Activated naive CD4-positive, alpha-beta T cell treated with anti-CD3 and anti-CD28 coated beads for 36 hours (primary cell): ENCODE measurements at regions of chr2 and their contacts with region 1.

Region 1: DNA sequence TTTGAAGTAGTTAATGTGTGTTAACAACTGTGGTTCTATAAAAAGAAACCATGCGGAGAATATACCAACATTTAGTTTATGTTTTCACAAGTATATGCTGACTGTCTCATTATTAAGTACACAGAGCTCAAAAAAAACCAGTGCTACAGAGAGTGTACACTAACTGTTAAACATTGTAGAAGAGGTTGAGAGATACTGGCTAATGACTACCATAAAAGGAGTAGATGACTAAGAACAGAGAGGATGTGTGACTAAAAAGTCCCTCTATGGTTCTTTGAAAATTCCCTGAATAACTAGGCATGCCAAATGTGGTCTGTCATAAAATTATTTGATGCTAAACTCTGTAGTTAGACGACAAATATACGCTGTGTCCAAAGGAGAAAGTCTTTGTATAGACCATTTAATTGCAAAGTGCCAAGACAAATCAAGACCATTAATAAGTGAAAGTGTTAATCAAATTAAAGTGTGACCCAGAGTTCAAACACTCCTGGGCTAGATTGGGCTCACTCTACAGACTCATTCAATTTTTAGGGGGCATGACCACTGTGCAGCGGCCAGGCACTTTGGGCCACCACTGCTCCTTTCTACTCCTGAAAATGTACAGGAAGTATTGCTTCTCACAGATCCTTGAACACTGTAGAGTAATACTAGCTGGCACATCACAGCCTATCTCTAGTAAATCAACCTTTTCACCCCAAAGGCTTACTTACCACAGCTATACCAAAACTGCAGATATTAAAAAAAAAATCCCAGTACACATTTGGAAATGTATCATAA is 45.1 kb upstream of the SERTAD2 start:
- DNase-seq: no peak
- H3K4me3 Mint-ChIP-seq: peak overlapping the region; percentile 8
- H3K27ac Mint-ChIP-seq: peak overlapping the region; percentile 68
- H3K4me1 Mint-ChIP-seq: peaks cover 47% of the 10 kb centered on the region
- H3K27me3 Mint-ChIP-seq: no peaks in the 10 kb centered on the region

Region 2: GRCh38 chr2:64653349-64654062 is 45.4 kb before region 1 on chr2 and contains the start of gene SERTAD2:
- CTCF ChIA-PET with region 1: interaction called, 9 read pairs
- intact Hi-C with region 1: loop called (anchors 1 kb)
- DNase-seq: peak; percentile 85
- H3K4me3 Mint-ChIP-seq: peak within 1 kb of the TSS; percentile 79
- H3K27ac Mint-ChIP-seq: peak within 1 kb of the TSS; percentile 83
- H3K4me1 Mint-ChIP-seq: peaks cover 74% of the 10 kb centered on the region
- H3K27me3 Mint-ChIP-seq: no peaks in the 10 kb centered on the region
- total RNA-seq, gene SERTAD2: 11.4 to 11.6 TPM

Region 3: DNA sequence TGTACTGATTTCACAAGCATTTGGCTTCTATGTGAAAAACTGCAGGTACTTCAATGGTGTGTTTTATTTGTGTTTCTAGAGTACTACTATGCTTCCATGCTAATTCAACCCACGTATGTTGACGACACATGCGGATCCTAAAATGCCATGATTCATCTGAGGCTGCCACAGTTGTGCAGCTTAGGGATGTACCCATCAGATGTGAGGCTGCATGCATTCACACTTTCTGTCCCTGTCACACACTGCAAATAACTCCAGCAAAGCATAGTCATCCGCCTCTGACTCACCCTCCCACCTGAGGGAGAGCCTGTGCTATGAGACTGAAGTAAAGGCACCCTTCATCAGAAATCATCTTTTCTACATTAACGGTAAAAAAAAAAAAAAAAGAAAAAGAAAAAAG is 23.0 kb before region 1 on chr2:
- CTCF ChIA-PET with region 1: interaction called, 3 read pairs
- intact Hi-C with region 1: loop called (anchors 1 kb)
- DNase-seq: peak; percentile 92
- H3K4me3 Mint-ChIP-seq: no peak overlapping the region
- H3K27ac Mint-ChIP-seq: no peak overlapping the region
- H3K4me1 Mint-ChIP-seq: peaks cover 42% of the 10 kb centered on the region
- H3K27me3 Mint-ChIP-seq: no peaks in the 10 kb centered on the region

Region 4: DNA sequence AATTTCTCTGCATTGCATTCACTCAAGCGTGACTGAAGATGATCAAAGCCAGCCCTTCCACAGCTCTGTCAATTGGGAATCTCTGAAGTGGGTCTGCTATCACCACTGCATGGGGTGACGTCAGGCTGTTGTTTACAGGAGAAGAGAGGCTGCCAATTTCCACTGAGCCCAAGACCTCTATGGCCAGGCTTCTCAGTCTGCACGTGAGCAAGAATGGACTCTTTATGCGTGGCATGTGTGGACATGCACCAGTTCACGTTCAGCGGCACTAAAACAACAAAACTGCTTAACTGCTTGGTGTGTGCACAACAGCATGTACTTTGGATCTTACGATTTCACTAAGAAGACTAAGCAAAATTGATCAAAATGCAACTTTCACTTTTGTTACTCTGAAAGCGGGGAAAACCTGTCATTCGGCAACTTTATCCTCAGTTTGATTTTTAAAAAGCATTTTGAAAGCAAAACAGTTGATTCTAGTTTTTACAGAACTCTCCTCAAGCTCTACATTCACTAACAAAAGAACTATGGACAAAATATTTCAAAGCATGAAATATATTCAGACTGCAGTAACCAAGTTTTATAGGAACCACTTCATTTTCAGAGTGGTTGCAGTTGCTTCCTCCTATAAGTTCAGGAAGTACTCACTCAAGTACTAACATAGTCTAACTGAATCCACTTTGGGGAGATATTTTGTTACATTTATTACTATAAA is 31.9 kb after region 1 on chr2:
- CTCF ChIA-PET with region 1: interaction called, 3 read pairs
- intact Hi-C with region 1: loop called (anchors 1 kb)
- DNase-seq: peak; percentile 49
- H3K4me3 Mint-ChIP-seq: peak overlapping the region; percentile 78
- H3K27ac Mint-ChIP-seq: peak overlapping the region; percentile 90
- H3K4me1 Mint-ChIP-seq: peaks cover 63% of the 10 kb centered on the region
- H3K27me3 Mint-ChIP-seq: no peaks in the 10 kb centered on the region

Region 5: DNA sequence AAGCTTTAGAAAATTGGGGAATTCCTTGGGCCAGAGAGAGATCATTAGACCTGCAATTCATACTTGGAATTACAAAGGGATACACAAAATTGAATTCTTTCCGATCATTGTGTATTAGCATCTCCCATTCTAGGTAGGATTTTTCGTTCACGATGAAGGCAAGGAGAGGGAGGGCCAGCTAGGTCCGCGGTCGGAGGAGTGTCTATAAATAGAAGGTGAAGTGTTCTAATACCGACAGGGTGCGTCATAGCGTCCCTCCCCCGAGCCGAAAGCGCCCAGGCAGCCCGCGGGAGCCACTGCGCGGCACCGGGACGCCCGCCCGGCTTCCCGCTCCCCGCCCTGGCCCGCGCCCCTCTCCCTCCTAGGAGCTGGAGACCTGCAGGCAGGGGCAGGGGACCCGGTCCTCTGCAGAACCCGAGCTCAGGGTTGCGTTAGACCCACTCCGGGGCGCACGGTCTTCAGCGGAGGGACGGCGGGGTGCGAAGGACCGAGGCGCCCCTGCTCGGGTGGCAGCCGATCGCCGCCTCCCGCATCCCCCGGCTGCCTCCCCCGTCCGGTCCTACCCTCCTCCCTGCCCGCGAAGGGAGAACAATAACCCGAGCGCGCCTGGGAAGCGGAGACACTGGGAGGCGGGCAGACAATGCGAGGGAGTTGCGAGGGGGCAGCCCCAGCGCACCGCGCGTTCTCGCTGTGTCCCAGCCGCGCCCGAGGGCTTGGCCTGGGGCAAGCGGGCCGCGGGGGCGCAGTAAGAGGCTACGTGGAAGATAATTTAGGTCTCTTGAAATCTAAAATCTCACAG is 69.0 kb after region 1 on chr2:
- CTCF ChIA-PET with region 1: no interaction called
- intact Hi-C with region 1: loop called (anchors 1 kb)
- DNase-seq: peak; percentile 85
- H3K4me3 Mint-ChIP-seq: peak overlapping the region; percentile 80
- H3K27ac Mint-ChIP-seq: peak overlapping the region; percentile 76
- H3K4me1 Mint-ChIP-seq: peaks cover 26% of the 10 kb centered on the region
- H3K27me3 Mint-ChIP-seq: no peaks in the 10 kb centered on the region

Region 6: GRCh38 chr2:65056215-65057053 is 357.6 kb after region 1 on chr2 and contains the start of gene CEP68:
- CTCF ChIA-PET with region 1: no interaction called
- intact Hi-C with region 1: loop called (anchors 2 kb)
- DNase-seq: peak; percentile 98
- H3K4me3 Mint-ChIP-seq: peak within 1 kb of the TSS; percentile 93
- H3K27ac Mint-ChIP-seq: peak within 1 kb of the TSS; percentile 67
- H3K4me1 Mint-ChIP-seq: peaks cover 51% of the 10 kb centered on the region
- H3K27me3 Mint-ChIP-seq: no peaks in the 10 kb centered on the region
- total RNA-seq, gene CEP68: 6.0 to 7.3 TPM